ENCODE measurements at regions of chr10 and their contacts with region 1.

Region 1: GRCh38 chr10:107994621-107995270 is 830.2 kb upstream of the SORCS1 start:
- DNase-seq: no peak
- CTCF ChIP-seq: no peak

Region 2: DNA sequence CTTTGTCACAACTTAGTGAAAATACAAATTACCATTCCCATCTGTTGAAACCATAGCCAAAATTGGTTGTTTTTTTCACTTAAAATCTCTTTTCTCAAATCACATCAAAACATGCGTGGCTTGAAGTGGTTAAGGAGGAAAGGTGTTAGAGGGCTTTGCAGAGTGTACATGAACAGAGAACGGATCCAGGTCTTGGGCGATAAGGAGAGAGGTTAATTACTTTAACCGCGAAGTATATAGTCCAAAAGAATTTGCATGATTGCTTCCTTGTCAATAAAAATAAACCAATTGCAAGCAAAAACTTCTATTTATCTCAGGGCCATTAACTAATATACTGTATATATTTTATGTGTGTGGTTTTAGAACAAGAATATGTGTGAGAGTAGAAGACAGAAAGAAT is 16.3 kb before region 1 on chr10:
- CTCF ChIA-PET with region 1: interaction called, 12 read pairs
- POLR2A ChIA-PET with region 1: no interaction called
- DNase-seq: no peak
- CTCF ChIP-seq: no peak